ENCODE measurements at regions of chr1 and their contacts with region 1.

Region 1: DNA sequence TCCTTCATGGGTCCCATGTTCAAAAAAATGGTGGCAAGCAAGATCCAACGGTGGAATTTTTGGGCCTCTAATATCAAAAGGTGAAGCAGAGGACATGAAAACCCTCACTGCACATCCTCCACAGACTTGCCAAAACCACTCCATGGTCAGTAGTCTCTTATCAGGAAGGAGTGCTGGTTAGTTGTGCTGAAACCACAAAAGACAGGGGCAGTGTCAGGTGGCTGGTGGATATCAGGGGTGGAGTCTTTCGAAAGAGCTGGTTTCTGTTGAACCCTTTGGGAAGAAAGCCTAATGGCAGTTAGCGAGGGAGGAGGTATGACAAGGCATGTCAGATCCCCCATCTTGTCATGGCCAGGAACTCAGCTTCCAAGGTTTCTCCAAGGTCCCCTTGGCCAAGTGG is 395.9 kb upstream of the CAMK1G start:
- DNase-seq: no peak
- ATAC-seq: no peak
- H3K4me3 ChIP-seq: no peak overlapping the region
- H3K27ac ChIP-seq: no peak overlapping the region
- H3K4me1 ChIP-seq: no peaks in the 10 kb centered on the region
- H3K27me3 ChIP-seq: no peaks in the 10 kb centered on the region

Region 2: DNA sequence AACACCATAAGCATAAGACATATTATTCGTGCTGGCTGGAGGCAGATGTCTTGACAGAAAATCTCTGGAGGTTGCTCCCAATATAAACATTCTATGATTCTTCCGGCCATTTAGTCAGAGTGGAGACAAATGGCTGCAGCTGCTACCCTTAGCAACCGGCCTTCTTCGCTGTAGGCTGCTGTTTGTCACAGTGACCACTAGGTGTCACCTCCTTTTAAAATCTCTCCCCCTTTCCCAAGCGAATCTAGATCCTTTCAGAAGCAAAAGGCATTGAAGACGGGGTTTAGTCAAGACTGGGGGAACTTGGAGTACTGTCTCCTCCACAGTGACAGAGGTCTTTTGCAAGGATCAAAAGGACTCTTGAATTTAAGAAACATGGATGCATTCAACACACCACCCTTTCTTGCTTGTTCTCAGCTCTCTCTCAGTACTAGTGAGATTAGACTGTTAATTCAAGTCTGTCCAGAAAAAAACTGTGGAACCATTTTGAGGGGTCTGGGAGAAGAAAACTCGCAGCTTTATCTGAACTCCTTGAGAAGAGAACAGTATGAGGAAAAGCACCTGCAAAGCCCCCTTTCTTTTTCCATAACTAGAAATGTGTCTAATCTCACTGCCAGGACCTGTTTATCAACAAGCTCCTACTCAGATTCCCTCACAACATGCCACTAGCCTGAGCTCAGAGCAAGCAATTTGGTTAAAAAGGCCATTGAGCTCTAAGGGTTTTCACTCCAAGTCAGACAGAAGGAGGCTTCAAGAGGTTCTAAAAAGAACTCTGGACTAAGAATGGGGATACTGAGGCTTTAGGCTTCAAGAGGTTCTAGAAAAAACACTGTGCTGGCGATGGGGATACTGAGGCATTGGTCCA is 535.1 kb before region 1 on chr1:
- intact Hi-C with region 1: loop called in 2 of 4 experiments (anchors 5 to 10 kb)
- DNase-seq: peak; percentile 20 to 63 (median 50)
- ATAC-seq: peak; percentile 79 to 80
- H3K4me3 ChIP-seq: no peak overlapping the region
- H3K27ac ChIP-seq: no peak overlapping the region
- H3K4me1 ChIP-seq: no peaks in the 10 kb centered on the region
- H3K27me3 ChIP-seq: no peaks in the 10 kb centered on the region

Region 3: GRCh38 chr1:209051570-209051969 is 136.0 kb before region 1 on chr1:
- intact Hi-C with region 1: no loop called
- DNase-seq: no peak
- ATAC-seq: no peak
- H3K4me3 ChIP-seq: no peak overlapping the region
- H3K27ac ChIP-seq: no peak overlapping the region
- H3K4me1 ChIP-seq: no peaks in the 10 kb centered on the region
- H3K27me3 ChIP-seq: no peaks in the 10 kb centered on the region

Region 4: DNA sequence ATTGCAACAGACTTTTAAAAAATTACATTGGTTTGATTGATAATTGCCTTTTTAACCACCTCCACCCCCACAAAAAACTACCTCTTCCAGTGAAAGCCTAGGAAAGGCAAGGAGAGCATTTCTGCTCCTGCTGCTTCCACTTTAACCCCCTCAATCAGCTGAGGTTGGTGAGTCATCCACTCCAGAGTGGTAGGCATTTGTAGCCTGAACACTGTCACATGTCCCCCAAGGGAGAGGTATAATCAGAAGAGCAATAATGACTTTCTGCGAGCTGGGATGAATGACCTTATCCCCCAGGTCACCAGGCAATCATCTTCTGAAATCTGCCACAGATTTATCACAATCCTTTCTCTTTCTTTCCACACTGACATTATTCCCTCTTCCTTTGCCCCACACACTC is 269.3 kb after region 1 on chr1:
- intact Hi-C with region 1: no loop called
- DNase-seq: no peak
- ATAC-seq: no peak
- H3K4me3 ChIP-seq: no peak overlapping the region
- H3K27ac ChIP-seq: no peak overlapping the region
- H3K4me1 ChIP-seq: no peaks in the 10 kb centered on the region
- H3K27me3 ChIP-seq: no peaks in the 10 kb centered on the region